Activated CD4-positive, alpha-beta memory T cell treated with anti-CD3 and anti-CD28 coated beads for 36 hours (primary cell): ENCODE measurements at regions of chr1 and their contacts with region 1.

Region 1: GRCh38 chr1:182629499-182630096 is 25.4 kb upstream of the RGS16 start:
- DNase-seq: peak; percentile 87
- H3K4me3 Mint-ChIP-seq: no peak overlapping the region
- H3K27ac Mint-ChIP-seq: peak overlapping the region; percentile 50
- H3K4me1 Mint-ChIP-seq: peaks cover 64% of the 10 kb centered on the region
- H3K27me3 Mint-ChIP-seq: peaks cover 9% of the 10 kb centered on the region

Region 2: DNA sequence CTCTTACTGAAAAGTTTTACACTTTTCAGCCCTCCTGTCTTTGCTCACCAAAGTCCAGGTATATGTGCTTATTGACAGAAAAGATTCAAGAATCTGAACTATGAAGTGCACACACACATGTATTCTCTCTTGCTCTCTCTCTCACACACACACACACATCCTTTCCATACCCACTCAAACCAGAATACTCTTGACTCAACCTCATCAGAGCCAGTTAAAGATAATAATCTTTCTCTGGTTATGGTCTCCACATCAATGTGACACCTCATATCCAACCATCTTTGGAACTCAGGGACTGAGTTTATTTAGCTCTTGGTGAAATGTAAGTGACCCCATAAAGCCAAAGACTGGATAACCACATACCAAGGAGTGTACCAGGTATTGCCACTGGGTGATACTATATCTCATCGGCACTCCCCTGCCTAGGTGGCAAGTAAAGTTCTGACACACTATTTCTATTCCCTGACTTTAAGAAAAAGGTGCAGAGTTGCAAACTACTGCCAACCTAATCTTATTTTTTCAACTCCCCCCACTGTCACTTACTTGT is 79.7 kb after region 1 on chr1:
- CTCF ChIA-PET with region 1: no interaction called
- POLR2A ChIA-PET with region 1: interaction called, 7 read pairs
- intact Hi-C with region 1: loop called (anchors 1 kb)
- DNase-seq: peak; percentile 17
- H3K4me3 Mint-ChIP-seq: no peak overlapping the region
- H3K27ac Mint-ChIP-seq: peak overlapping the region; percentile 3
- H3K4me1 Mint-ChIP-seq: peaks cover 30% of the 10 kb centered on the region
- H3K27me3 Mint-ChIP-seq: no peaks in the 10 kb centered on the region

Region 3: GRCh38 chr1:182716740-182717720 is 87.4 kb after region 1 on chr1:
- CTCF ChIA-PET with region 1: interaction called, 4 read pairs
- POLR2A ChIA-PET with region 1: interaction called, 7 read pairs
- intact Hi-C with region 1: loop called (anchors 2 kb)
- DNase-seq: no peak
- H3K4me3 Mint-ChIP-seq: no peak overlapping the region
- H3K27ac Mint-ChIP-seq: peak overlapping the region; percentile 19
- H3K4me1 Mint-ChIP-seq: peaks cover 39% of the 10 kb centered on the region
- H3K27me3 Mint-ChIP-seq: no peaks in the 10 kb centered on the region